ENCODE measurements at regions of chr2 and their contacts with region 1.

Region 1: DNA sequence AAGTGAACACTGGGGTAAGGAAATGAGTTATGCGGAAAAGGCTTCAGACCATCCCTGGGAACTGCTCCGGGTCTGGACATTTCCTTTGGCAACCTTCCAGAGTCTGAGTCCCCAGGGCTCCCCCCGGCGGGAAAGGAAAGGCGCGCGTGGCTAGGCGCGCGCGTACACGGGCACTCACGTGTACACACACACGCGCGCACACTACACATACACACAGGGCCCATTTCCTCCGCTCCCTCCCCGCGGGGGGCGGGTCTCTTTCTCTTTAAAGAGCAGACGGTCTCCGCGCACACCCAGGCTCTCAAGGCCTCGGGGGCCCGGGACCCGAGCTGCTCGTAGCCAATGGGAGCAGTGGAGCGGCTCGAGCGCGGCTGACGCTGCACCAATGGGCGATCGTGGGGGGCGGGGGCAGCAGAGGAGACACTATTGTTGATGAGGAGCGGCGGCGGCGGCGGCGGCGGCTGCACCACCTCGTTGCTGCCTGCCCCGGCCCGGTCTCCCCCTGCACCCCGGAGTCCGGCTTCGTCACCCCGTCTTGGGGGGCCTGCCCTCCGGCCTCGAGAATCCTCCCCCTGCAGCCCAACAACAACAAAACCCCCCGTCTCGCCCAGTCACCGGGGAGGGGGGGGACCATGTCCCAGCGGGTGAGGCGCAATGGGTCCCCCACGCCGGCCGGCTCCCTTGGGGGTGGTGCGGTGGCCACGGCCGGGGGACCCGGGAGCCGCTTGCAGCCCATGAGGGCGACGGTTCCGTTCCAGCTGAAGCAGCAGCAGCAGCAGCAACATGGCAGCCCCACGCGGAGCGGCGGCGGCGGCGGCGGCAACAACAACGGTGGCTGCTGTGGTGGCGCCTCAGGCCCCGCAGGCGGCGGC is at the start of gene FAM117B:
- DNase-seq: peak; percentile 98
- H3K4me3 ChIP-seq: peak within 1 kb of the TSS; percentile 97
- H3K4me3 Mint-ChIP-seq: peak within 1 kb of the TSS; percentile 89
- H3K27ac Mint-ChIP-seq: peak within 1 kb of the TSS; percentile 80
- H3K4me1 ChIP-seq: peaks cover 9% of the 10 kb centered on the region; the same call in 1 of the 2 replicates
- H3K4me1 Mint-ChIP-seq: peaks cover 15% of the 10 kb centered on the region
- H3K27me3 ChIP-seq: no peaks in the 10 kb centered on the region
- H3K27me3 Mint-ChIP-seq: no peaks in the 10 kb centered on the region
- CTCF ChIP-seq: peak in 1 of 2 experiments; percentile 34
- total RNA-seq, gene FAM117B: 9.6 and 9.8 TPM in 2 replicates

Region 2: DNA sequence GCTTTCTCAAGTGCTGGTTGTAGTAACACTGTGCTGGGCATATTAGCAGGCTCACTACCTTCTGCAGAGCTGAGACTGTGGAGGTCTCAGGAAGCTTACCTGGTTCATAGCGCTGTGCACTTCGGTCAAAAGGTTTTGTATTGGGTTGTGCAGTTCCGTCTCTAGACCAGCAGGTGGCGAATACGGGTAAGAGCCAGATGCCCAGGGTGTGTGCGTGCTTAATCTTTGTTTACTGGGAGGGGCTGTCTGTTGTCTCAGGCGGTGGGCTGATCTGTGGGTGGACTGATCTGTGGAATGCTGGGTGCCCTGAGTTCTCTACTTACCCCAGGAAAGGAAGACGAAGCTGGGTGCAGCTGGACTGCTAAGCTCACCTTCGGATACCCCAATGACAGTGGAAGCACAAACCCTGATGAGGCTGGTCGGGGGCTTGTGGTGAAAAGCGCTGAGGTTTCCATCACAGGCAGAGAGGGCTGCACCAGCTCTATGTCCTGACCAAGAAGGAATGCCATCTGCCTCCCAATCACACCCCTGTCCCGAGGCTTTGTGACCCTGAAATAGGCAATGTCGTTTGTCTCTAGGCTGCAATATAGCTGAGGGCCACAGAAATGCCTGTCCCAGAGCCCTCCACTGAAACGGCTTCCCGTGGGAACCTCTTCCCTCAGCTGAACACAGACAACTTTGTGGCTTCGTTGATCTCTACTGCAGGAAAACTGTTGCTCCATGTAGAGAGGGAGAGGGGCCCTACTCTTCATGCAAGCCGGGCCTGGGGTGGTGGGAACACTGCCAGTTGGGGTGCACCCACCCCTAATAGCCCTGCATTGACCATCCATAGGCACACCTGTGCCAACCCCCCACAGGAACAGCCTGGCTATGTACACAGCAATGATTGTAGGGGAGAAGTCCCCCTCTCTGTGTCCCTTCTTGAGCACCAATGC is 45.9 kb before region 1 on chr2:
- CTCF ChIA-PET with region 1: interaction called, 21 read pairs
- POLR2A ChIA-PET with region 1: interaction called, 3 read pairs
- intact Hi-C with region 1: loop called (anchors 1 kb)
- DNase-seq: peak; percentile 81 to 86
- H3K4me3 ChIP-seq: no peak overlapping the region
- H3K4me3 Mint-ChIP-seq: peak overlapping the region; percentile 40
- H3K27ac Mint-ChIP-seq: no peak overlapping the region
- H3K4me1 ChIP-seq: peaks cover 11% of the 10 kb centered on the region
- H3K4me1 Mint-ChIP-seq: peaks cover 9% of the 10 kb centered on the region
- H3K27me3 ChIP-seq: no peaks in the 10 kb centered on the region
- H3K27me3 Mint-ChIP-seq: no peaks in the 10 kb centered on the region
- CTCF ChIP-seq: peak; percentile 85 to 86

Region 3: GRCh38 chr2:203261326-203262159 is 626.8 kb after region 1 on chr2:
- CTCF ChIA-PET with region 1: no interaction called
- POLR2A ChIA-PET with region 1: interaction called, 12 read pairs
- intact Hi-C with region 1: no loop called
- DNase-seq: peak in 1 of 2 experiments; percentile 10
- H3K4me3 ChIP-seq: no peak overlapping the region
- H3K4me3 Mint-ChIP-seq: no peak overlapping the region
- H3K27ac Mint-ChIP-seq: no peak overlapping the region
- H3K4me1 ChIP-seq: no peaks in the 10 kb centered on the region
- H3K4me1 Mint-ChIP-seq: peaks cover 6% of the 10 kb centered on the region
- H3K27me3 ChIP-seq: no peaks in the 10 kb centered on the region
- H3K27me3 Mint-ChIP-seq: no peaks in the 10 kb centered on the region
- CTCF ChIP-seq: no peak

Measured in Caco-2 (cell line).